ENCODE measurements at regions of chr6 and their contacts with region 1.

Region 1: GRCh38 chr6:136289579-136290409 is at the start of gene BCLAF1:
- DNase-seq: peak; percentile 99
- H3K4me3 Mint-ChIP-seq: peak within 1 kb of the TSS; percentile 97
- H3K27ac Mint-ChIP-seq: peak within 1 kb of the TSS; percentile 100
- H3K4me1 Mint-ChIP-seq: peaks cover 44% of the 10 kb centered on the region
- H3K27me3 Mint-ChIP-seq: no peaks in the 10 kb centered on the region
- total RNA-seq, gene BCLAF1: 108 to 117 TPM

Region 2: DNA sequence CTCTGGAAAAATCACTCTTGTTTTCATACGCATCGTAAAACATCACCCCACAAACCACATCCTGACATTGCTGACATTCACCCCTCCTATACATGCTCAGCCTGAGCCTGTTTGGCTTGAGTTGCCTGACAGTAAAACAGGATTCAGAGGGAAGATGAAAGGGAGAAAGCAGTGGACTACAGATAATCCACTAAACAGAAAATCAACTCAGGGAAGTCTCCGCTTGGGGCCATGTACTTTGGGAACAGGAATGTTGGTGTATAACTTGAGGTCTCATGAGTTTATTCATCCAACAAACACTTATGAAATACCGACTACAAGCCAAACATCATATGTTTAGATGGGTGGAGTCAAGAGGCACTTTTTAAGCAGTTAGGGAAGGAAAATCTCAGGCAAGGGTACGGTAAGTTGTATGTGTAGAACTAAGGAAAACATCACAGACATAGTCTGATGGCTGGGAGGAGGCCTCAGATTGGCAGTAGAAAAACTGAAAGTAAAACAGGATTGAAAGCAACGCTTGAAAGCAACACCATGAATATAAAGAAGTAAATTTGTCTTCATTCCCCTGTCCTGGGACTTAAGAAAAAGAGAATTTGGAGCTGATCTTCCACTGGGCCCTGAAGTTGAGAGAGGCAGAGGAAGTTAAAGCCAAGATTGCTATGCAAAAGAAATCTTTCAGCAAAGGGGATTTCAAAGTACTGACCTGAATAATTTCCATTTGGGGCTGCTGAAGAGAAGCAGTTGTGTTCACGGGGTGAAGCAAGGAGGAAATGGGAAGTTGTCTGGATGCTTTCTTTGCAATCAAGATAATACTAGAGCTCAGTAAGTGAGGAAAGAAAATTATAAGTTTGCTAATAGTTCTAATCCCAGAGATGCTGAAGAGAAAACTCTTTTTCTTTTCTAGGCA is 409.5 kb before region 1 on chr6:
- CTCF ChIA-PET with region 1: interaction called, 3 read pairs
- intact Hi-C with region 1: loop called (anchors 1 kb)
- DNase-seq: peak; percentile 75
- H3K4me3 Mint-ChIP-seq: peak overlapping the region; percentile 77
- H3K27ac Mint-ChIP-seq: peak overlapping the region; percentile 98
- H3K4me1 Mint-ChIP-seq: peaks cover 64% of the 10 kb centered on the region
- H3K27me3 Mint-ChIP-seq: no peaks in the 10 kb centered on the region

Region 3: GRCh38 chr6:136137008-136137692 is 152.6 kb before region 1 on chr6:
- CTCF ChIA-PET with region 1: no interaction called
- intact Hi-C with region 1: no loop called
- DNase-seq: no peak
- H3K4me3 Mint-ChIP-seq: no peak overlapping the region
- H3K27ac Mint-ChIP-seq: no peak overlapping the region
- H3K4me1 Mint-ChIP-seq: no peaks in the 10 kb centered on the region
- H3K27me3 Mint-ChIP-seq: peaks cover 2% of the 10 kb centered on the region

Region 4: DNA sequence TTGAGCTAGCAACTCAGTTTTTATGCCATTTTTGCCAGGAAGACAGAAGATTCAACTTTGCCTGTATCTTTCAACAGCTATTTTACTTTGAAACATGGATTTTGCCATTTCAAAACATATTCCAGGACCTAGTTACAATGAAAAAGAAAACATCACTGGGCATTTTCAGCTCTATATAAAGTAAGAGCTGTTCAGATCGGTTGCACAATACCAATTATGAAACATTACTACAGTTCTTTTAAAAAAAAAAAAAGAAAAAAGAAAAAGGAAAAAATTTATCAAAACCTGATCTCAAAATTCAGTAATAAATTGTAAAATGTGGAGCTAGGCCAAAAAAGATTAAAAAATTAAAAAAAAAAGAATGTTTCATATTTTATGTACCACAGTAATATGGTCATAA is 15.7 kb before region 1 on chr6:
- CTCF ChIA-PET with region 1: interaction called, 3 read pairs
- intact Hi-C with region 1: loop called (anchors 2 kb)
- DNase-seq: no peak
- H3K4me3 Mint-ChIP-seq: no peak overlapping the region
- H3K27ac Mint-ChIP-seq: no peak overlapping the region
- H3K4me1 Mint-ChIP-seq: peaks cover 29% of the 10 kb centered on the region
- H3K27me3 Mint-ChIP-seq: no peaks in the 10 kb centered on the region

Region 5: GRCh38 chr6:136526196-136526930 is 236.6 kb after region 1 on chr6:
- CTCF ChIA-PET with region 1: no interaction called
- intact Hi-C with region 1: loop called (anchors 2 kb)
- DNase-seq: peak; percentile 73
- H3K4me3 Mint-ChIP-seq: peak overlapping the region; percentile 61
- H3K27ac Mint-ChIP-seq: peak overlapping the region; percentile 44
- H3K4me1 Mint-ChIP-seq: peaks cover 23% of the 10 kb centered on the region
- H3K27me3 Mint-ChIP-seq: peaks cover 10% of the 10 kb centered on the region

Region 6: DNA sequence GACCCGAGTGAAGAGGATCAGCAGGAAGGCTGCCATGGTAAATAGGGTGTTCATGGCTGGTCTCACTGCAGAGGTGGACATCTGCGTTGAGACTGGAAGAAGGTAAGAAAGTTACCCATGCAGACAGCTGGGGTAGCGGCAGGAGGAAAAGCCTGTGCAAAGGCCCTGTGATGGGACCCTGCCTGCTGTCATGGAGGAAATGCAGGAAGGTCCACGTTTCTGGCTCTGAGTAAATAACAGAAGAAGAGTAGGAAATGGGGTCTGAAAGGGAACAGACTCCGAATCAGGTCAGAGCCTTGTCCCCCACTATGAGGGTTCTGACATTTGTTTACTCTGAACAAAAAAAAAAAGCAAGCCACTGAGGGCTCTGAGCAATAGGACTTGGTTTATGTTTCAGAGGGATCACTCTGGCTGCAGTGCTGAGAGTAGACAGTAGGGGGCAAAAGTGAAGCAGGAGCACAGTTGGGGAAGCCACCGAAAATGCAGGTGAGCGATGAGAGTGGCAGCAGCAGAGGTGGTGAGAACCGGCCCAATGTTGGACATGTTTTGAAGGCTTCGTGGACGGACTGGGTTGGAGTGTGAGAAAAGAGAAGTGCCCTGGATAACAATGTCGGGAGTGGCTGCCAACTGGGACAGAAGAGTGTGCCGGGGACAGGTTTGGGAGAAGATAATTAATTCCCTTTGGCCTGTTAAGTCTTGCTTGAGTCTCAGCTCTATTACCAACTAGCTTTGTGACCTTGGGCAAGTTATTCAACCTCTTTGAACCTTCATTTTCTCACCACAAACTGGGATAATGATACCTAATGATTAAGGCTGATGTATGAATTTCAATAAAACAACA is 318.4 kb after region 1 on chr6:
- CTCF ChIA-PET with region 1: no interaction called
- intact Hi-C with region 1: no loop called
- DNase-seq: peak; percentile 92
- H3K4me3 Mint-ChIP-seq: no peak overlapping the region
- H3K27ac Mint-ChIP-seq: no peak overlapping the region
- H3K4me1 Mint-ChIP-seq: peaks cover 12% of the 10 kb centered on the region
- H3K27me3 Mint-ChIP-seq: no peaks in the 10 kb centered on the region

Region 7: DNA sequence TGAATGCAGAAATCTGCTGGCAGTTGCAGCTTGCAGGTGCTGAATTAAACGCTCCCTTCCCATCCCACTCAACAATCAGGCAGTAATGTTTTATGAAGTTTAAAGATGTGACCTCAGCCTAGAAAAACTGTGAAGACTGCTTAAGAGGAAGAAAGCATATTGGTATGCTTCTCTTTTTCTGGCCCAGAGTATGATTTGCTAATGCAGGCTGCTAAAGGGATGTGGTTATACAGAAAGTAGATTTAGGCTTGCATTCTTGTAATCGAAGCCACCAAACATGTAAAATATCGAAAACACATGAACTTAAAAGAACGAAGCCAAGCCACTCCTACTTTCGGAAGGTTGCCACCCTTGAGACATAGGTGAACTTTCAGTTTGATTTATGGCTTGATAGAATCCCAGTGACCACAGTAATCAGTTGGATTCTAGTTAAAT is 461.7 kb after region 1 on chr6:
- CTCF ChIA-PET with region 1: no interaction called
- intact Hi-C with region 1: loop called (anchors 1 kb)
- DNase-seq: peak; percentile 55
- H3K4me3 Mint-ChIP-seq: peak overlapping the region; percentile 23
- H3K27ac Mint-ChIP-seq: peak overlapping the region; percentile 74
- H3K4me1 Mint-ChIP-seq: peaks cover 67% of the 10 kb centered on the region
- H3K27me3 Mint-ChIP-seq: no peaks in the 10 kb centered on the region

Measured in activated naive CD4-positive, alpha-beta T cell treated with anti-CD3 and anti-CD28 coated beads for 36 hours (primary cell).